Activated naive CD4-positive, alpha-beta T cell treated with anti-CD3 and anti-CD28 coated beads for 36 hours (primary cell): ENCODE measurements at regions of chr1 and their contacts with region 1.

Region 1: DNA sequence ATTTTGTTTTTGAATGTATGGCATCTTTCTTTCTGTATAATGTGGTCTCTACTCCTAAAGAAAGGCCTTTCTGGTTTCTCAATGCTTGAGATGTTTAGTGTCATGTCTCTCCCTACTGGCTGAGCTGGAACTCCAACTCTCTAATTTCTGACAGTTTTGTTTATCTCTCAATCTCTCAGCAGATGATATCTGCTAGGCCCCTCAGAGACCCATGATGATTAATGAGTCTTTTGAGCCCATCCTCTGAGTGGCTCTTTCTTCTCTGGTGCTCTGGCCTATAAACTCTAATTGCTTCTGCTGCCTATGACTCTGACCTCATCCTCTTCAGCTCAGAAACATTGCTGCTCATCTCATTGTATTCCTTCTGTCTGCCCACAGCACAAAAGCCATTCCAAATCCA is 46.6 kb downstream of the CRB1 start:
- DNase-seq: no peak
- H3K4me3 Mint-ChIP-seq: no peak overlapping the region
- H3K27ac Mint-ChIP-seq: no peak overlapping the region
- H3K4me1 Mint-ChIP-seq: no peaks in the 10 kb centered on the region
- H3K27me3 Mint-ChIP-seq: no peaks in the 10 kb centered on the region

Region 2: DNA sequence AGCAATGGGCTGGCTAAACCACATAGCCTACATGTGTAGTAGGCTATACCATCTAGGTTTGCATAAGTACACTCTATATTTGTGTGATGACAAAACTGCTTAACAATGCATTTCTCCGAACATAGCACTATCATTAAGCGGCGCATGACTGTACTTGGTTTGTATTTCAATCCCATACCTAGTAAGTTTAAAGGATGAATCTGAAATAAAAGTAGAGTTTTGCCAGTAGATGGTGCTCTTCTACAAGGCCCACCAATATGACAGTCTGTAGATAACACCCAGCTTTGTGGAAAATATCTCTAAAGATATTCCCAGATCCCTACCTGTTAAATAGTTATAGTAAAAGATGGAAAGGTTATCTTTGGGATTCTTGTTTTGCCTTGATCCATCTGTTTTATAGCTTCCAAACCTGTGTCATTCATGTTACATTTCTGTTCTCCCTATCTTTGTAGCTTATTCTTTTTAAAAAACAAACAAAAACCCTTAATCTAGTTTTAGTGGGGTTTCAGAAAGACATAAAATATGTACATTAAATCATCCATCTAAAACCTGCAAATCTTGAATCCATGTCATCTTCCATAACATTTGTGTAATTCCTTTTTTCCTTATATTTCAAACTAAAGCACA is 134.3 kb before region 1 on chr1:
- CTCF ChIA-PET with region 1: interaction called, 6 read pairs
- intact Hi-C with region 1: loop called (anchors 5 kb)
- DNase-seq: no peak
- H3K4me3 Mint-ChIP-seq: no peak overlapping the region
- H3K27ac Mint-ChIP-seq: no peak overlapping the region
- H3K4me1 Mint-ChIP-seq: no peaks in the 10 kb centered on the region
- H3K27me3 Mint-ChIP-seq: no peaks in the 10 kb centered on the region

Region 3: GRCh38 chr1:198620951-198621824 is 1306.5 kb after region 1 on chr1:
- CTCF ChIA-PET with region 1: no interaction called
- intact Hi-C with region 1: no loop called
- DNase-seq: peak; percentile 77
- H3K4me3 Mint-ChIP-seq: peak overlapping the region; percentile 82
- H3K27ac Mint-ChIP-seq: peak overlapping the region; percentile 100
- H3K4me1 Mint-ChIP-seq: peaks cover 86% of the 10 kb centered on the region
- H3K27me3 Mint-ChIP-seq: no peaks in the 10 kb centered on the region